ENCODE measurements at regions of chr10 and their contacts with region 1.

Region 1: DNA sequence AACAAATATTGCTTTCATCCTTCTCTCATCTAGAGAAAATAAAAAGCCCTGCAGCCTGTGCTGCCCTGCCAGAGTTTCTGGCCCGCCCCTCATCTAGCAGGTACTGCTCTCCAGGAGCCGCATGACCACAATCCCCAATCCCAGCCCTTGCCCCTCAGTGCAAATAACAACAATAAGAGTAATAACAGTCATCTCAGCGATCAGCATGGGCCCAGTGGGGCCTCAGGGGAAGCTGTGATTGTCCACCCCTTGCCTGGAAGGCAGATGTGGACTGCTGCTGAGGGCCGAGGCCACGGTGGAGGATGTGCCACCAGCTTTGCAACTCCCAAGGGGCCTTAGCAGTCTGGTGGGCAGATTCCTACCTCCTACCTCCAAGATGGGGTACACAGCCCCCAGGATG is 106.1 kb downstream of the CDH23 start:
- DNase-seq: no peak
- H3K4me3 ChIP-seq: no peak overlapping the region
- H3K27ac ChIP-seq: no peak overlapping the region
- H3K4me1 ChIP-seq: no peaks in the 10 kb centered on the region
- H3K27me3 ChIP-seq: no peaks in the 10 kb centered on the region
- CTCF ChIP-seq: no peak

Region 2: DNA sequence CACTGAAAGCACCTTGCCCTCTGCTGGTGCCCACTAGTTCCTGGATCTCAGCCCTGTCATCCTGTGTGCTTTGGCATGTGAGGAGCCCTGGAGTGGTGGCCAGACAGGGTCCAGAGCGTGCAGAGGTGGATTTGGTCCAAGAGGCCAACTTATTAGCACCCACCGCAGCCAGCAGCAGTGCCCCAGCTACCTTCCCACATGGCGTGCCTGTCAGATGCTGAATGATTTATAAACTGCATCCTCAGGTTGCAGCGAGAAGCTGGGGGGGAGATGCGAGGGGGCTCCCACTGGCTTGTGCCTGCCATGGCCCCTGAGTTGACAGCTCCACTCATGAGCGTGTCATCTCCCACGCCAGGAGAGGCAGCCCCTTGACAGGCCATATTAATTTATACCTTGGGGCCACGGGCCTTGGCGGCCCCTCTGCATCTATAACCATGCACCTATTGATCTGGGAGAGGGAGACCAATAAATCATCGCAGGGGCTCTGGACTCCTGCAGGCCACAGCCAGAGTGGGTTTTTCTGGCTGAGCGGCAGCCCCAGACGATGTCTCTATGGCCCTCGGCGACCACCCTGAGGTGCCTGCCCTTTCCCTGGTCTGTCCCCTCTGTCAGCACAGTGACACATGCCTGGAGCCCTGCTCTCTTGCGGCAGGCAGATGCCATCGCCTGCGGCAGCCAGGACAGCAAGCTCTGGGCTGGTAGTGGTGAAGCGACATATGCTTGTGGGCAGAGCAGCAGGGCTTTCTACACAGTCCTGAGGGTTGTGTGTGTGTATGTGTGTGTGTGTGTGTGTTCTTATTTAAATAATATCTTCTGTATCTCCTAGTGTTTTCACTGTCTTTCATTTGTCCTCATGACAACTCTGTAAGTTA is 14.7 kb after region 1 on chr10:
- CTCF ChIA-PET with region 1: no interaction called
- dilution Hi-C with region 1: no loop called
- in situ Hi-C with region 1: no loop called
- intact Hi-C with region 1: no loop called
- DNase-seq: no peak
- H3K4me3 ChIP-seq: no peak overlapping the region
- H3K27ac ChIP-seq: no peak overlapping the region
- H3K4me1 ChIP-seq: peaks cover 16% of the 10 kb centered on the region
- H3K27me3 ChIP-seq: no peaks in the 10 kb centered on the region
- CTCF ChIP-seq: no peak

Region 3: DNA sequence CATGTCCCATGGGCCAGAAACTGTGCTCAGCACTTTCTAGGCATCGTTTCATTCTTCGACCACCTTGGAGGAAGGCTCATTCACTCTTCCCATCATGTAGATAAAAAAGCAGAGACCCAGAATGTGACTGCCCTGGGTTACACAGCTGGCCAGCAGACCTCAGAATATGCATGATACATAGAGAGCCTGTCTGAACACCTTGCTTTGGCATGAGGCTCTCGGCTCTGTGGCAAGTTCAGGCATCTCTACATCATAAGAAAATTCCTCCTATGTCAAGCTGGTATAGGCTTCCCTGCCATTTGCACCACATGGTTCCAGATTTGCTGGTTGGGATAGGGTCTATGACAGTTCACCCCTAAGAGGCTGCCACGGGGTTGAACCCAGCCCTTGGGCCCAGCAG is 27.9 kb after region 1 on chr10:
- CTCF ChIA-PET with region 1: no interaction called
- dilution Hi-C with region 1: no loop called
- in situ Hi-C with region 1: no loop called
- intact Hi-C with region 1: loop called (anchors 1 kb)
- DNase-seq: peak; percentile 64
- H3K4me3 ChIP-seq: no peak overlapping the region
- H3K27ac ChIP-seq: no peak overlapping the region
- H3K4me1 ChIP-seq: peaks cover 27% of the 10 kb centered on the region
- H3K27me3 ChIP-seq: no peaks in the 10 kb centered on the region
- CTCF ChIP-seq: no peak